ENCODE measurements at regions of chr4 and their contacts with region 1.

Region 1: DNA sequence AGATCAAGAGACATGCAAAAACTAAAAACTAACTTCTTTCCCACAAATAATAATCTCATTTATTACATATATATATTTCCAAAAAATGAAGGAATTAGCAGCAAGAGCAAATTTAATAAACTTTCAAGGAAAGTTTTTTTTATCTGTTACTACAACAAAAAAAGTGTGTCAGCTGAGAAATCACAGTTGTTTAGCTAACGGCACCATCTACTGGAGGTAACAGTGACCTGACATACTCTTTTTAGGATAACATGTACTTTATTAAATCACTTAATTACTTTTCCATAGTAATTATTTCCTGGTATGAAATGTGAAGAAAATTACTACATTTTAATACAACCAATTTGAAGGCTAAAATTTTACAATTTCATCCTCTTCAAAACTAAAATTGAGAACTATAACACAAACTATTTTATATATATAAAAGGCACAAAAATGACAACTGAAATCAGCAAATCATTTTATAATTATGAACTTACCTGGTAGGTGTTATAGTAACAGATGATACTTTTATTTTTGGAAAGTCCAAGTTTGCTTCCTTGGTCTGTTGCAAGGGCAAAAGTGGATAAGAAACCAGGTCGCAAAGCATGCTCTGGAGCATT is 9.1 kb downstream of the LAMTOR3 start:
- DNase-seq: no peak
- H3K4me3 ChIP-seq: no peak overlapping the region
- H3K27ac ChIP-seq: peak overlapping the region in 1 of 4 donors; percentile 13
- H3K4me1 ChIP-seq: peaks cover 12 to 31% (median 28%) of the 10 kb centered on the region in 4 donors
- H3K27me3 ChIP-seq: no peaks in the 10 kb centered on the region
- CTCF ChIP-seq: peak; percentile 53 to 67 (median 62)
- EP300 ChIP-seq: no peak
- POLR2A ChIP-seq: no peak

Region 2: DNA sequence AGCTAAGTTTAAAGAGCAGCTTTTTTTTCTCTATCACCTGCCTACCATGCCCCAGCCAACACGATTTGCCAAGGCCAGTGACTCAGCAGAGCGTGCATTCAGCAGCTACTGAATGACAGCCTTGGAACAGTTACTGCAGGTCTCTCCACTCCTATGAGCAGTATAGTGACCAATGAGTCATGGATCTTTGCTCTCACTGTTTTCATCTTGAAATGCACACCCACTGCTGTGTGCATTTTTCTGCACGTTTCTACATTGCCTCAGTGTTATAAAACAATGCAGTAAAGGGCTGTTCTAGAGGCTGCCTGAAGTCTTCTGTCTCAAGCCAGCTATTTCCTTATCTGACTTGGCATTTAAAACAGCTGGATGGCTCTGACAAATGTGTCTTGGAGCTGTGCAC is 161.6 kb before region 1 on chr4:
- intact Hi-C with region 1: loop called (anchors 10 kb)
- DNase-seq: no peak
- H3K4me3 ChIP-seq: no peak overlapping the region
- H3K27ac ChIP-seq: peak overlapping the region; percentile 79 to 83 (median 81)
- H3K4me1 ChIP-seq: peaks cover 23 to 54% (median 46%) of the 10 kb centered on the region in 4 donors
- H3K27me3 ChIP-seq: no peaks in the 10 kb centered on the region
- CTCF ChIP-seq: no peak
- EP300 ChIP-seq: no peak
- POLR2A ChIP-seq: no peak